ENCODE measurements at regions of chr17 and their contacts with region 1.

Region 1: DNA sequence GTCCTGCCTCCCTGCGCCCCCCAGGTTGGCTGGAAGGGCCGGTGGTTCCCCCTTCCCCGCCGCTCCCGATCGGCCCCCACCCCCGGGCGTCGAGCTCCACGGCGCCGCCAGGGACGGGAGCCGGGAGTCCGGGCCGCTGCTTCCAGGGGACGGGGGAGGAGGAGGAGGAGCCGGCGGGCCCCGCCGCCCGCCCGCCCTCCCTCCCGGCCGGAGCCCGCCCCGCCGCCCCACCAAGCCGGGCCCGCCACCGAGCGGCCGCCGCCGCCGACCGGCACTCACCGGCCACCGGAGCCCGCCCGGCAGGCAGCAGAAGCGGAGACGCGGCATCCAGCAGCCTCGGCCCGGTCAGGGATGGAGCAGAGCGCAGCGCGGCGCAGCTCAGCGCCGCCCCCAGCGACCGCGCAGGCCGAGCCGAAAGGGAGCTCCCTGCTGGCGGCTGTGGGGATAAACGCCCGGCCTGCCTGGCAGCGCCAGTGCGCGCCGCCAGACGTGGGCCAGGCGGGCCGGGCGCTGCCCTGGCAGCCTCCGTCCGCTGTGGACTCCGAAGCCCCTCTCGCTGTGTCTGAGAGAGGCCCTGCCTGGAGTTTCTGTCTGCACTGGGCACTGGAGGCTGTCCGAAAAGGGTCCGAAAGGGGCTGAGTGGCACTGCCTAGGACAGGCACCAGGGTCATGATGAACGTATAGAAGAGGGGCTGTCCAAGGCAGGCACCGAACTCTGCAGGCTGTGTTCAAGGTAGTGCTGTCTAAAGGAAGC is at the start of gene MYO18A:
- DNase-seq: peak; percentile 75
- H3K4me3 Mint-ChIP-seq: peak within 1 kb of the TSS; percentile 68
- H3K27ac Mint-ChIP-seq: peak within 1 kb of the TSS; percentile 18
- H3K4me1 Mint-ChIP-seq: peaks cover 36% of the 10 kb centered on the region
- H3K27me3 Mint-ChIP-seq: peaks cover 6% of the 10 kb centered on the region
- total RNA-seq, gene MYO18A: 38.2 and 40.5 TPM in 2 replicates

Region 2: DNA sequence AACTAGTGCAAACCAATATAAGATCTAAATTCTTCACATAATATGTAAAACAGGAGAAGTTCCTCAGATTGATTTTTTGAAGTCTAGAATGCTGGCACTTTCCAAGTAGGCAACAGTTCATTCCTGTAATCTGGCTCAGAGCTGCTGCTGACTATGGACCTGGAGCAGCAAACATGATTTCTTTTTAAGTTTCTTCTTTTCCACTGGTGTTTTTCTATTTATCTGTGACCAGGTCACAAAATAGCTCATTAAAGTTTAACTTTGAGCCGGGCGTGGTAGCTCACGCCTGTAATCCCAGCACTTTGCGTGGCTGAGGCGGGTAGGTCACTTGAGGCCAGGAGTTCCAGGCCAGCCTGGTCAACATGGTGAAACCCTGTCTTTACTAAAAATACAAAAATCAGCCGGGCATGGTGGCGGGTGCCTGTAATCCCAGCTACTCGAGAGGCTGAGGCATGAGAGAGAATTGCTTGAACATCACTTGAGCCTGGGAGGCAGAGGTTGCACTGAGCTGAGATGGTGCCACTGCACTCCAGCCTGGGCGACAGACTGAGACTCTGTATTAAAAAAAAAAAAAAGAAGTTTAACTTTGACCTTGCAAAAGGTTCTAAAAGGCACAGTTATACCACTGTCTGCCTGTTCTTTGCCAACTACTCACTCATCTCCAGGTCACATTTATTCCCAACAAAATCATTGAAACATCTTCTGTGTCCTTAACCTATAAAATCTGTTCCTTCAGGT is 736.1 kb before region 1 on chr17:
- intact Hi-C with region 1: no loop called
- DNase-seq: no peak
- H3K4me3 Mint-ChIP-seq: no peak overlapping the region
- H3K27ac Mint-ChIP-seq: no peak overlapping the region
- H3K4me1 Mint-ChIP-seq: no peaks in the 10 kb centered on the region
- H3K27me3 Mint-ChIP-seq: peaks cover 9% of the 10 kb centered on the region

Region 3: GRCh38 chr17:29124117-29124924 is 55.9 kb before region 1 on chr17:
- intact Hi-C with region 1: loop called (anchors 1 kb)
- DNase-seq: peak; percentile 34
- H3K4me3 Mint-ChIP-seq: no peak overlapping the region
- H3K27ac Mint-ChIP-seq: no peak overlapping the region
- H3K4me1 Mint-ChIP-seq: no peaks in the 10 kb centered on the region
- H3K27me3 Mint-ChIP-seq: no peaks in the 10 kb centered on the region

Region 4: GRCh38 chr17:29148790-29149430 is 31.3 kb before region 1 on chr17:
- intact Hi-C with region 1: loop called (anchors 1 kb)
- DNase-seq: peak; percentile 91
- H3K4me3 Mint-ChIP-seq: peak overlapping the region; percentile 79
- H3K27ac Mint-ChIP-seq: peak overlapping the region; percentile 64
- H3K4me1 Mint-ChIP-seq: peaks cover 63% of the 10 kb centered on the region
- H3K27me3 Mint-ChIP-seq: no peaks in the 10 kb centered on the region

Region 5: GRCh38 chr17:29155227-29155965 is 24.8 kb before region 1 on chr17:
- intact Hi-C with region 1: loop called (anchors 1 kb)
- DNase-seq: peak; percentile 51
- H3K4me3 Mint-ChIP-seq: peak overlapping the region; percentile 63
- H3K27ac Mint-ChIP-seq: peak overlapping the region; percentile 87
- H3K4me1 Mint-ChIP-seq: peaks cover 60% of the 10 kb centered on the region
- H3K27me3 Mint-ChIP-seq: no peaks in the 10 kb centered on the region

Region 6: GRCh38 chr17:29219378-29220047 is 39.3 kb after region 1 on chr17:
- intact Hi-C with region 1: loop called (anchors 2 kb)
- DNase-seq: peak; percentile 55
- H3K4me3 Mint-ChIP-seq: no peak overlapping the region
- H3K27ac Mint-ChIP-seq: no peak overlapping the region
- H3K4me1 Mint-ChIP-seq: peaks cover 9% of the 10 kb centered on the region
- H3K27me3 Mint-ChIP-seq: peaks cover 4% of the 10 kb centered on the region

Measured in activated T-helper 1 cell treated with anti-CD3 and anti-CD28 coated beads, Interleukin-12 subunit alpha, Interleukin-12 subunit beta, Interleukin-2, Interleukin-4 antibody, amounts not matched to agents 30 ng/mL and 10 ng/mL and 1 ng/mL, durations not matched to agents 14 hours and 24 hours and 36 hours (primary cell).